ENCODE measurements at regions of chr11 and their contacts with region 1.

Region 1: DNA sequence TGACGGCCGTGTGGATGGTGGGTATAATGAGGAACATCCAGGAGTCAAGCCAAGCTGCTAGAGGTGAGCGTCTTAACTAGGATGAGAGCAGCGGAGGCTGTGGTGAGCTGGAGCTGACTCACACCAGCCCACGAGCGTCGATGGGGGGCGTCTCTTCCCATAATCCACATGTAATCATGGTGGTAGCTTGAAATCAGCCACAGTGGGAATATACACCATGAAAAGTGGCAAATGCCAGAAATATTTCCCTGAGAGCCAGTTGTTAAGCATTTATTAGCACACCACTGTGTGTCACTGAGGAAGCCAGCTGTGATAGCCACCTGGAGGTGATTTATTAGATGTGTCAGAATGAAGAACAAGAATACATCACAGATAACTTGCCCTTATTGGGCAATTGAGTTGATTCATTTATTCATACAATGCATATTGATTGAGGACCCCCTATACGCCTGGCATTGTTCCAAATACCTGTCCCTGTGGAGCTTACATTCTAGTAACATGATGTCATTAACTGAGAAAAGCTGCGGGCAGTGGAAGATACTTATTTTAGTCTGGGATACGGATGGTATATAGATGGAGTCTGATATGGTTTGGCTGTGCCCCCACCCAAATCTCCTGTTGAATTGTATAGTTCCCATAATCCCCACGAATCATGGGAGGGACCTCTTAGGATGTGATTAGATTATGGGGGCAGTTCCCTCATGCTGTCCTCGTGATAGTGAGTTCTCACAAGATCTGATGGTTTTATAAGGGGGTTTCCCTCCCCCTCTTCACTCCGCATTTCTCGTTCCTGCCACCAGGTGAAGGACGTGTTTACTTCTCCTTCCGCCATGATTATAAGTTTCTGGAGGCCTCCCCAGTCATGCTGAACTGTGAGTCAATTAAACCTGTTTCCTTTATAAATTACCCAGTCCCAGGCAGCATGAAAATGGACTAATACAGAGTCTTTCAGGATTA is 473.4 kb downstream of the METTL15 start:
- DNase-seq: no peak
- H3K4me3 ChIP-seq: no peak overlapping the region
- H3K27ac ChIP-seq: no peak overlapping the region
- H3K4me1 ChIP-seq: no peaks in the 10 kb centered on the region
- CTCF ChIP-seq: no peak

Region 2: DNA sequence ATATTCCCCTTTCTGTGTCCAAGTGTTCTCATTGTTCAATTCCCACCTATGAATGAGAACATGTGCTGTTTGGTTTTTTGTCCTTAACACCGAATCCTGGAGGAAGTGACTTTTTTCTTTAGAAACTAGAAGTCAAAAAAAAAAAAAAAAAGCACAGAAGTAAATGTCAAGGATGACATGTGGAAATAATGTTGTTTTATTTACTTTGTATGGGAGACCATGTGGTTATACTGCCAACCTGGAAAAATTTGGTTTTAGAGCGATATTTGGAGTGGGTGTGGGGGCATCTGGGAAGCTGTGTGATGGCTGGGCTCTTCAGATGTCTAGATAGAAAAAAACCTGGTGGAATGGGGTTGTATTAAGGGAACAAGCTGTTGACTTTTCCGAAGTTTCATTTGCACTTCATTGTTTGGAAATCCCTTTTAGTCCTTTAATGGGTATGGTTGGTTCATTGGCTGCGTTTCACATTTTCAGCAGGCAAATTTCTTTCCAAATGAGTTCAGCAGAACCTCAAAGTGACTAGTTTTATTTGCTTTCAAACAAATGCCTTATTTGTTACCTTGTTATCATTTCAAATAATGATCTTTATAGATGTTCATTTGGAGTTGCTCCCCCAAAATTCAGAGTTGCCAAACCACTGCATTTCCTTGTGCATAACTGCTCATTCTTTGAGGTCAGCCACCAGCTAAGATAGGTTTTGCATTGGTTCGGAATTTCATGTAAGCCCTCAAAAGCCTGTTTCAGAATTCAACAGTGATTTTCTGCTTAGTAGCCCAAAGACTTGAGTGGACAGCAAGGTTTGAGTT is 34.8 kb after region 1 on chr11:
- CTCF ChIA-PET with region 1: no interaction called
- POLR2A ChIA-PET with region 1: no interaction called
- intact Hi-C with region 1: loop called (anchors 2 kb)
- DNase-seq: no peak
- H3K4me3 ChIP-seq: no peak overlapping the region
- H3K27ac ChIP-seq: no peak overlapping the region
- H3K4me1 ChIP-seq: no peaks in the 10 kb centered on the region
- CTCF ChIP-seq: no peak

Region 3: GRCh38 chr11:28777126-28777525 is 195.6 kb after region 1 on chr11:
- CTCF ChIA-PET with region 1: no interaction called
- POLR2A ChIA-PET with region 1: no interaction called
- intact Hi-C with region 1: no loop called
- DNase-seq: no peak
- H3K4me3 ChIP-seq: no peak overlapping the region
- H3K27ac ChIP-seq: no peak overlapping the region
- H3K4me1 ChIP-seq: no peaks in the 10 kb centered on the region
- CTCF ChIP-seq: no peak